Left cardiac atrium (tissue), 4 donors: ENCODE measurements at regions of chr7 and their contacts with region 1.

Region 1: GRCh38 chr7:108146070-108146837 is 16.1 kb upstream of the LAMB4 start:
- DNase-seq: peak; percentile 48
- ATAC-seq: peak; percentile 83 to 85

Region 2: GRCh38 chr7:107743567-107744344 is 402.5 kb before region 1 on chr7 and contains the start of gene CBLL1:
- intact Hi-C with region 1: loop called in 1 of 2 experiments (anchors 10 kb)
- DNase-seq: peak; percentile 98
- ATAC-seq: peak; percentile 99
- total RNA-seq, gene CBLL1: 17.8 to 21.2 TPM

Region 3: GRCh38 chr7:107879400-107880035 is 266.7 kb before region 1 on chr7:
- intact Hi-C with region 1: loop called in 1 of 2 experiments (anchors 5 kb)
- DNase-seq: no peak
- ATAC-seq: peak; percentile 67 to 76

Region 4: GRCh38 chr7:107939573-107940489 is 206.4 kb before region 1 on chr7:
- intact Hi-C with region 1: loop called in 1 of 2 experiments (anchors 5 kb)
- DNase-seq: peak; percentile 83
- ATAC-seq: peak; percentile 38 to 66